Activated CD4-positive, alpha-beta T cell treated with anti-CD3 and anti-CD28 coated beads for 36 hours (primary cell): ENCODE measurements at regions of chr5 and their contacts with region 1.

Region 1: GRCh38 chr5:127030259-127031146 is at the start of gene MARCHF3:
- DNase-seq: peak; percentile 96
- ATAC-seq: peak; percentile 98
- H3K4me3 Mint-ChIP-seq: peak within 1 kb of the TSS; percentile 83
- H3K27ac Mint-ChIP-seq: peak within 1 kb of the TSS; percentile 78
- H3K4me1 Mint-ChIP-seq: peaks cover 16% of the 10 kb centered on the region
- H3K27me3 Mint-ChIP-seq: no peaks in the 10 kb centered on the region
- total RNA-seq, gene MARCHF3: 3.6 to 4.2 TPM

Region 2: GRCh38 chr5:126656396-126657007 is 374.0 kb before region 1 on chr5:
- CTCF ChIA-PET with region 1: no interaction called
- POLR2A ChIA-PET with region 1: no interaction called
- intact Hi-C with region 1: loop called in 1 of 2 experiments (anchors 5 kb)
- DNase-seq: peak; percentile 52
- ATAC-seq: no peak
- H3K4me3 Mint-ChIP-seq: no peak overlapping the region
- H3K27ac Mint-ChIP-seq: no peak overlapping the region
- H3K4me1 Mint-ChIP-seq: peaks cover 5% of the 10 kb centered on the region
- H3K27me3 Mint-ChIP-seq: peaks cover 2% of the 10 kb centered on the region

Region 3: GRCh38 chr5:126808521-126808988 is 221.9 kb before region 1 on chr5:
- CTCF ChIA-PET with region 1: interaction called, 3 read pairs
- POLR2A ChIA-PET with region 1: no interaction called
- intact Hi-C with region 1: loop called in 1 of 2 experiments (anchors 1 kb)
- DNase-seq: no peak
- ATAC-seq: no peak
- H3K4me3 Mint-ChIP-seq: no peak overlapping the region
- H3K27ac Mint-ChIP-seq: no peak overlapping the region
- H3K4me1 Mint-ChIP-seq: peaks cover 51% of the 10 kb centered on the region
- H3K27me3 Mint-ChIP-seq: no peaks in the 10 kb centered on the region

Region 4: GRCh38 chr5:126988021-126988569 is 42.4 kb before region 1 on chr5:
- CTCF ChIA-PET with region 1: interaction called, 6 read pairs
- POLR2A ChIA-PET with region 1: no interaction called
- intact Hi-C with region 1: loop called (anchors 1 to 2 kb)
- DNase-seq: peak; percentile 56
- ATAC-seq: peak; percentile 95
- H3K4me3 Mint-ChIP-seq: peak overlapping the region; percentile 37
- H3K27ac Mint-ChIP-seq: peak overlapping the region; percentile 92
- H3K4me1 Mint-ChIP-seq: peaks cover 38% of the 10 kb centered on the region
- H3K27me3 Mint-ChIP-seq: no peaks in the 10 kb centered on the region

Region 5: DNA sequence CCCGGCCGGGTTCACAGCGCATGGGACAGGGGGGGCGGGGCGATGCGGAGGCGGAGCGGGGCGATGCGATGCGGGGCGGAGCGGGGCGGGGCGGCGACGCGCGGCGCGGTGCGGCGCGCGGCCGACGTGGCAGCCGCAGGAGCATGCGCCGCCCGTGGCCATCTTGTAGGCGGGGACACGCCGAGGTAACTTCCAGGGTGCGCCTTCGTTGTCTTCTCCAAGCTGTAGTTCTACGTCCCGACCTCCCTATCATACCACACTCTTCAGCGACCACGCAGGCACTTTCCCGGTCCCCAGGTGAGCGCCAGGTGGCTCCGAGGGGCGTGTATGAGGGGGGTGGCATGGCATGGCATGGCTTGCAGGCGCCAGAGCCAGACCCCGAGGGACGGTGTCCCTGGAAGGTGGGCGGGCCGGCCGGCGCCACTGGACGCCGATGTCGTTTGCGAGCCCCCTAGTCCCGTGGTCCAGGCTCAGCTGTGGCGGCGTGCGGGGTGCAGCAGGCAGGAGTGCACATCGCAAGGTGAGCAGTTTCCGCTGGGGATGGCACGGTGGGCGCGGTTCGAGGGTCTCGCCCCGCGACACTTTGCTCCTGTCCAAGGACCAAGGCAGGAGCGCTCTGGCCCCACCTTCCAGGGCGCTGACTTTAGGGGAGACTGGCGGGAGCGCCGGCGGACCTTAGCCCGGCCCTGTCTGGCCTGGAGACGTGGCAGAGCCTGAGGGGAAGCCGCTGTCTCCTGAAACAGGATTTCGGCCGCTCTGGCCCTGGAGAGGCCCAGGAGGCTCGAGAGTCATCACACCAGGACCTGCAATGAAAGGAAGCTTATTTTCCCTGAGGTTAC is 487.2 kb after region 1 on chr5 and contains the start of gene PRRC1:
- CTCF ChIA-PET with region 1: no interaction called
- POLR2A ChIA-PET with region 1: interaction called, 3 read pairs
- intact Hi-C with region 1: loop called in 1 of 2 experiments (anchors 1 kb)
- DNase-seq: peak; percentile 90
- ATAC-seq: peak; percentile 95
- H3K4me3 Mint-ChIP-seq: peak within 1 kb of the TSS; percentile 80
- H3K27ac Mint-ChIP-seq: peak within 1 kb of the TSS; percentile 77
- H3K4me1 Mint-ChIP-seq: peaks cover 28% of the 10 kb centered on the region
- H3K27me3 Mint-ChIP-seq: no peaks in the 10 kb centered on the region
- total RNA-seq, gene PRRC1: 35.8 to 47.1 TPM

Region 6: GRCh38 chr5:128498844-128499455 is 1468.4 kb after region 1 on chr5:
- CTCF ChIA-PET with region 1: no interaction called
- POLR2A ChIA-PET with region 1: no interaction called
- intact Hi-C with region 1: no loop called
- DNase-seq: no peak
- ATAC-seq: no peak
- H3K4me3 Mint-ChIP-seq: no peak overlapping the region
- H3K27ac Mint-ChIP-seq: no peak overlapping the region
- H3K4me1 Mint-ChIP-seq: no peaks in the 10 kb centered on the region
- H3K27me3 Mint-ChIP-seq: no peaks in the 10 kb centered on the region